AG04449 (cell line): ENCODE measurements at regions of chr1 and their contacts with region 1.

Region 1: DNA sequence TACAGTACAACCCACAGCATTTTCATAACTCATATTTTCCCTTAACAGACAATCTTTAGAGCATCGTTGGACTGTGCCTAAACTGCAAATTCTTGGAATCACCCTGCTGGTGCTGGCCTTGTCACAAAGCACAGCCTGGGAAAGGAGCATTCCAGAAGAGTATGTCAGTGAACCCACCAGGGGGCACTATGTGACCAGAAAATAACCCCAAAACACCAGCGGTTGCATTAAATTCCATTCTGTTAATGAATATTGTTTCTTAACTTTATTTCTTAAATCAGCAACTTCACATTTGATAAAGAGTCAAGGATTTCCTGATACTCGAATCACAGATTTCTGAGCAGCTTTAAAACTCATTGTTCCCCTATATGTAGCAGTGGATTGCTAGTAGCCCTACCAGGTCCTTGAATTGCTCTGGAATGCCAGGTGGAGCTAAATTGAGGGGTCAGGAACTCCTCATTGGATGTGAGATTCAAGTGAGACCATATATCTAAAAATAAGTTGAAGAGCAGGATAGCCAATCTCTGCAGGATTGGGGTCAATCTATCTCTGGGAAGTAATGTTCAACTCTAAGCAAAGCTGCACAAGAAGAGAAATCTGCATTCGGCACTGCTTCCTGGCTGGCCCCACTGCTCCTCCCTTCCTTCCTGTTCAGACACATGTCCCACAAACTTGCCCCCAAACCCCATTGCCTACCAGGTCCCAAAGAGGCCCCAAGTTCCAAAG is 12.7 kb upstream of the RAB4A start:
- DNase-seq: no peak
- H3K4me3 ChIP-seq: no peak overlapping the region
- CTCF ChIP-seq: peak; percentile 64

Region 2: DNA sequence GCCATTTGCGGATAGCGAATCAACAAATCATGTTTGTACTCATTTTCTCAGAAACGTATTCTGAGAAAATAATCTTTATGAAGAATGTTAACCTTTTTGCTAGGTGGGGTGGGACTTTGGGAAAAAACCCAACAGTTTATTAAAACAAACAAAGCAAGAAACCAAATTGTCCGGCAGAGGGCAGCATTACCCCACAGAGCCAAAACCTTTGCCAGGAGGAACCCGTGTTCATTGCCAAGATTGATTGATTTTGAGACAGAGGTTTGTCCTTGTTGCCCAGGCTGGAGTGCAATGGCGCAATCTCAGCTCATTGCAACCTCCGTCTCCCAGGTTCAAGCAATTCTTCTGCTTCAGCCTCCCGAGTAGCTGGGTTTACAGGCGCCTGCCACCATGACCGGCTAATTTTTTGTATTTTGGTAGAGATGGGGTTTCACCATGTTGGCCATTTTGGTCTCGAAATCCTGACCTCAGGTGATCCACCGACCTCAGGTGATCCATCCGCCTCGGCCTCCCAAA is 593.7 kb before region 1 on chr1:
- CTCF ChIA-PET with region 1: interaction called, 76 read pairs
- POLR2A ChIA-PET with region 1: no interaction called
- DNase-seq: no peak
- H3K4me3 ChIP-seq: no peak overlapping the region
- CTCF ChIP-seq: peak; percentile 67

Region 3: DNA sequence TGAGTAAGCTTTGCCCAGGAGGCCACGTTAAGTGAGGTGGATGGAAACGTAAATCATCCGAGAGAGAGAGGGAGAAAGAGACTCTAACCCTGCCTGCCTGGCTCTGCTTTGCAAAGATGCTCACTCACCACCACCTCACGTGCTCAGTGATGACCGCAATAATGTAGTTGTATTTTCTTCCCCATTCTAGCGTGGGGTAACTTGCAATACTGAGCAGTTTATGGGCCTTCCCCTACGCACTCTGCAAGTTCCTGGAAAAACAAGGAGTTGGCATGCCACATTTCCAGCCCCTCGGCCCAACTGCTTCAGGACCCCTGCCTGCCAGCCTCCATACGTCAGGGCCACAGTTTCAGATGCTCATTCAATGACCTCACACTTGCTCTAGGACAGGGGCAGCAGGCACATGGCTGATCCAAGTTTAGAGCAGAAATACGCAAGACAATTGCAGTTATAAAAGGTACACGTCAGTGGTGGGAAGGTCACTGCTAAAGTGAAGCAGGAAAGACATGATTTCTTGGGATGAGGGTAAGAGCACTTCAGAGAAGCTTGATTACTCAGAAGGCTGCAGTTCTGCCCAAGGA is 99.8 kb before region 1 on chr1:
- CTCF ChIA-PET with region 1: no interaction called
- POLR2A ChIA-PET with region 1: no interaction called
- DNase-seq: no peak
- H3K4me3 ChIP-seq: no peak overlapping the region
- CTCF ChIP-seq: no peak

Region 4: GRCh38 chr1:229440851-229441537 is 182.8 kb after region 1 on chr1:
- CTCF ChIA-PET with region 1: interaction called, 11 read pairs
- POLR2A ChIA-PET with region 1: no interaction called
- DNase-seq: peak; percentile 45
- H3K4me3 ChIP-seq: no peak overlapping the region
- CTCF ChIP-seq: no peak

Region 5: DNA sequence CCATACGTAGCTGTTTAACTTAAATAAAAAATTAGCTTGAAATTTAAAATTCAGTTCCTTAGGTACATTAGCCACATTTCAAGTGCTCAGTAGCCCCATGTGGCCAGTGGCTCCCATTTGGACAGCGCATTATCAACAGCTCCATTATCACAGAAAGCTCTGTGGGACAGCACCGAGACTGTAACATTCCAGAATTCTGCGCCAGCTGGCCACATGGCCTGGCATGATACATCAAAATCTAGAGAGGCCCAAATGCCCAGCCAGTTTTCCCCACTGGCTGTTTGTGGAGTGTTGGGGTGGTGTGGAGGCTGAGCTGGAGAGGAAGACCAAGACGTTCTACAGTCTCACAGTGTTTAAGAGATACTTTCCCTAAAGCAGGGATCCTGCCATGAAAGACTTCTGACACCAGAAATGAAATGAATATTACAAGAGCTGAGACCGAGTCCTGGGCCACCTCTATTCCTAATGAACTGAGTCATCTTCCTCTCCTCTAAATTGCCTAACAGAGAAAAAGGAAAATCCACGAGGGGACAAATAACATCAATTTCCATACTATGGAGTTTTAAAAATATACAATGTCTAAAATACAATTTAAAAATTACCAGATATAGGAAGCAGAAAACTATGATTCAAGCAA is 203.0 kb after region 1 on chr1:
- CTCF ChIA-PET with region 1: interaction called, 93 read pairs
- POLR2A ChIA-PET with region 1: no interaction called
- DNase-seq: no peak
- H3K4me3 ChIP-seq: no peak overlapping the region
- CTCF ChIP-seq: no peak

Region 6: DNA sequence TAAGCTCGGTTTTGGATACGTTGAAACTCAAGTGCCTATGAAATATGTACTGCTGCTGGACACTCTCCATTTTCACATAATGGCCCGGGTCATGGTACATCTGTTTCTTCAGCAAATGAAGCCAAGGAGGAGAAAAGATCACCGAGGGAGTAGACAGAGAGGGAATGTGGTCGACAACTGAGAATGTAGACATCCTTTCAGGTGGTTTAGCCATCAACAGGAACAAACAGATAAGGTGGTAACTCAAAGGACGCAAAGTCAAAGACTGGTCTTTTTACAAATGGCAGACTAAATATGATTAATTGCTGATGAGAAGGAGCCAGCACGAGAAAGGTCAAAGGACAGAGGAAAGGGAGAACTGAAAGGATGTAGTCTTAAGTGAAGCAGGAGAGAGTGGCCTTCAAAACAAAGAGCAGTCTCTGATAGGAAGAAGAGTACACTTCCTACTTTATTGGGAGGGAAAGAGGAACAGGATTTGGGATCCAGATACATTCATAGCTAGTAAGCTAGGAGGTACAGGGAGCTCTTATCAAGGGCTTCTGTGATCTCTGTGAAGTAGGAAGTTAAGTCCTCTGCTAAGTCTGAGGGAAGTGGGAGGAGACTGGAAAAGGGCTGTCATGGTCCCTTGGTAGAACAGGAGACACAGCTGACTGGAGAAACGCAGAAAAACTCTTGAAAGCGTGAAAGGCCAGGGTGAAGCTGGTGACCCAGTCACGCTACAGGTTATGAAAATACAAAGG is 221.6 kb after region 1 on chr1:
- CTCF ChIA-PET with region 1: interaction called, 231 read pairs
- POLR2A ChIA-PET with region 1: no interaction called
- DNase-seq: no peak
- H3K4me3 ChIP-seq: no peak overlapping the region
- CTCF ChIP-seq: no peak